Mammary epithelial cell (primary cell): ENCODE measurements at regions of chr9 and their contacts with region 1.

Region 1: DNA sequence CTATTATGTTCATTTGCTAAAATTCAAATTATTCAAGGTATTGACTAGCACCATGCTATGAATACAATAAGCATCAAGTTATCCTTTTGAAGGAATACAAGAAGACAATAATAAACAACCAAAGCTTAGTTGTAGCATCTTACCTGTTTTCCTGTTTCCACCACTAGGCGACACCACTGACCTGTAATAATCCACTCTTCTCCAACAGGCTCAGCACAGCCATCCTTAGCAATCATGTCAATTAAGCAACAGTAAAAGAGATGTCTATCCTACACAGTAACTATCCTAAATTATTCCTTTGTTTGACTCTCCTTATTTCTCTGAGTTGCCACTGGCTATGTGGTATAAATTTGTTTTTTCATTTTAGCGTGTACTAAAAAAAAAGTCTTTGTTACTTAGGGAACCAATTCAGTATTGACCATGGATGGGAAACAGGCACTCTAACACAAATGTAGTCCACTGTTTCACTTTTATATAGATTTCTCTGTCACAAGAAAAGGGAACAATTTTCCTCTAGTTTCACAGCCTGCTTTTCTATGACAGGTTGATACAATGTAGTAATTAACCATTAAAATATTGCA is 46.2 kb downstream of the PCA3 start:
- DNase-seq: peak; percentile 35
- H3K4me3 ChIP-seq: no peak overlapping the region
- H3K27ac ChIP-seq: no peak overlapping the region
- H3K4me1 ChIP-seq: no peaks in the 10 kb centered on the region
- H3K27me3 ChIP-seq: peaks cover 2% of the 10 kb centered on the region
- CTCF ChIP-seq: peak; percentile 93 to 98

Region 2: GRCh38 chr9:76761448-76761847 is 49.0 kb before region 1 on chr9:
- CTCF ChIA-PET with region 1: no interaction called
- dilution Hi-C with region 1: no loop called
- in situ Hi-C with region 1: no loop called
- intact Hi-C with region 1: no loop called
- DNase-seq: no peak
- H3K4me3 ChIP-seq: no peak overlapping the region
- H3K27ac ChIP-seq: no peak overlapping the region
- H3K4me1 ChIP-seq: no peaks in the 10 kb centered on the region
- H3K27me3 ChIP-seq: no peaks in the 10 kb centered on the region
- CTCF ChIP-seq: peak; percentile 17 to 35

Region 3: GRCh38 chr9:76866689-76867088 is 56.2 kb after region 1 on chr9:
- CTCF ChIA-PET with region 1: no interaction called
- dilution Hi-C with region 1: no loop called
- in situ Hi-C with region 1: no loop called
- intact Hi-C with region 1: no loop called
- DNase-seq: peak; percentile 54
- H3K4me3 ChIP-seq: no peak overlapping the region
- H3K27ac ChIP-seq: no peak overlapping the region
- H3K4me1 ChIP-seq: no peaks in the 10 kb centered on the region
- H3K27me3 ChIP-seq: no peaks in the 10 kb centered on the region
- CTCF ChIP-seq: no peak

Region 4: DNA sequence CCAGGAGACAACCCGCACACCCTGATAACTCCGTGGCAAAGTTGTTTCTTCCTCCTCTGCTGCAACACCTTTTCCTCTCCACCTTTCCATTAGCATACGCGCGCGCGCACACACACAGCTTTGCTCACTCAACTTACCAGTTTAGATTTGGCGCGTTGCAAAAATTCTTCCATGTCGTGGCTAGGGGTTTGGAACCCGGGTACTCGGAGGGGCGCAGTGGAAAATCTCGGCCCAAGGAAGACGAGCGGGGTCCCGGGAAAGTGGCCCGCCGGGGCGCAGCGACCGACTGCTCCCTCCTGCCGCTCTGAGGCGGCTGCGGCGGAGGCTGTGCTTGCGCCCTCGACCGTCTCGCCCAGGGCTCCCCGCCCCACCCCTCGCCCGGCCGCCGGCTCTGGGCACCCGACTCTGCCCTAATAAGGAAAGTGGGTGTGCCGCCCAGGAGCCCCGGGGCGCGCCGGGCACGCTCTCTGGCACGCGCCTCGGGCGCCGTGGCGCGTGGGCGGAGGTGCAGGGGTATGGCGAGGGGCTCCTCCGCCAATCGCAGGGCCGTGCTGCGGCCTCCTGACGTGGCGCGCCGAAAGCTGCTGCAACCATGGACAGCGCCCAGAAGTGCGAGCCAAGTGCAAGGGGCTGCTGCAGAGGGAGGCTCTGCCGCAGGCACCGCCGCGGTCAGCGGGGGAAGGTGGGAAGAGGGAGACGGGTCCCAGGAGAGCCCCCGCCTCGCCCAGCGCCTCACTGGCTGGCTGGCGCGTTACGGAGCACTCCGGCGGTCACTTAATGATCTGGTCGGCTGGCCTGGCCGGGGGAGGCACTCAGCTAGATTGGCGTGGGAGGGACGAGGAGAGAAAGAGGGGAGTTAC is 95.6 kb after region 1 on chr9 and contains the start of gene PRUNE2:
- CTCF ChIA-PET with region 1: no interaction called
- dilution Hi-C with region 1: no loop called
- in situ Hi-C with region 1: no loop called
- intact Hi-C with region 1: loop called (anchors 5 kb)
- DNase-seq: peak; percentile 69
- H3K4me3 ChIP-seq: peak within 1 kb of the TSS; percentile 15 to 28 (median 27)
- H3K27ac ChIP-seq: no peak within 1 kb of the TSS
- H3K4me1 ChIP-seq: peaks cover 13% of the 10 kb centered on the region
- H3K27me3 ChIP-seq: peaks cover 13% of the 10 kb centered on the region
- CTCF ChIP-seq: no peak
- total RNA-seq, gene PRUNE2: 1.6 to 9.2 TPM

Region 5: DNA sequence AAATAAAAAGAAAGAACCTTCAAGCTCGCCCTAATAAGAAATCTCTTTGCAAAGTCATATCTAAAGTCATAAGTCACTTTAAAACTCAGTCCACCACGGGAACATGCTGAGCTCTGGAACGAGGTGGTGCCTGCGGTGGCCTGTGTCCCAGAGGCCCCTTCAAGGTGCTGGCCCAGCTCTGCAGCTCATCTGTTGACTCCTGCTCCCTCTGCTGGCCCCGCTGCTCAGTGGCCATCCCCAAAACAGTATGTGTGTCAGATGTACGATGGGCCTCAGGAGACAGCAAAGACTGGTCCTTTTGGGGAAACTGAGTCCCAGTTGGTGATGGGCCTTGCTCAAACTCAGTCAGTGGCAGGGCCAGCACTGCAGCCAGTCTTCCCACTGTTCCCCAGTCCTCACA is 186.2 kb after region 1 on chr9:
- CTCF ChIA-PET with region 1: no interaction called
- dilution Hi-C with region 1: loop called (anchors 25 kb)
- in situ Hi-C with region 1: loop called (anchors 5 to 25 kb)
- intact Hi-C with region 1: no loop called
- DNase-seq: no peak
- H3K4me3 ChIP-seq: no peak overlapping the region
- H3K27ac ChIP-seq: no peak overlapping the region
- H3K4me1 ChIP-seq: no peaks in the 10 kb centered on the region
- H3K27me3 ChIP-seq: no peaks in the 10 kb centered on the region
- CTCF ChIP-seq: peak; percentile 26 to 63

Region 6: DNA sequence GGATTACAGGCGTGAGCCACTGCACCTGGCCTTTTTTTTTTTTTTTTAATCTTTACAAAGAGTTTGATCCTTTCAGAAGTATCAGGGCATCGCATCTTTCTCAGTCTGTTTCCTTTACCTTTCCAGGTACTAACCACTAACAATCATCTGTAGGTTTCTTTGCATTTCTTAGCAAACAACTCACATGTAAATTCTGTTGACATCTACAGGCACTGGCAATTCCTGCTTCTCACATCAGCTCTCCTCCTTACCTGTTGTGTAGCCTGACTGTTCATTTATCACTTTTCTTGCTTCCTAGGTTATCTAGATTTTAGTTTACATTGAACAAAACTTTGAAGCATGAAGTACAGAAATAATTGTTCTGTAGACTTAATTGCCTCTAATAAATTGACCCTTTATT is 339.4 kb after region 1 on chr9:
- CTCF ChIA-PET with region 1: interaction called, 4 read pairs
- dilution Hi-C with region 1: no loop called
- in situ Hi-C with region 1: loop called (anchors 25 kb)
- intact Hi-C with region 1: loop called (anchors 1 kb)
- DNase-seq: no peak
- H3K4me3 ChIP-seq: no peak overlapping the region
- H3K27ac ChIP-seq: no peak overlapping the region
- H3K4me1 ChIP-seq: no peaks in the 10 kb centered on the region
- H3K27me3 ChIP-seq: peaks cover 2% of the 10 kb centered on the region
- CTCF ChIP-seq: no peak

Region 7: GRCh38 chr9:77488439-77489126 is 678.1 kb after region 1 on chr9:
- CTCF ChIA-PET with region 1: no interaction called
- dilution Hi-C with region 1: no loop called
- in situ Hi-C with region 1: no loop called
- intact Hi-C with region 1: loop called (anchors 10 kb)
- DNase-seq: no peak
- H3K4me3 ChIP-seq: no peak overlapping the region
- H3K27ac ChIP-seq: no peak overlapping the region
- H3K4me1 ChIP-seq: no peaks in the 10 kb centered on the region
- H3K27me3 ChIP-seq: no peaks in the 10 kb centered on the region
- CTCF ChIP-seq: peak; percentile 39 to 64